CD4-positive, alpha-beta memory T cell (primary cell): ENCODE measurements at regions of chr21 and their contacts with region 1.

Region 1: DNA sequence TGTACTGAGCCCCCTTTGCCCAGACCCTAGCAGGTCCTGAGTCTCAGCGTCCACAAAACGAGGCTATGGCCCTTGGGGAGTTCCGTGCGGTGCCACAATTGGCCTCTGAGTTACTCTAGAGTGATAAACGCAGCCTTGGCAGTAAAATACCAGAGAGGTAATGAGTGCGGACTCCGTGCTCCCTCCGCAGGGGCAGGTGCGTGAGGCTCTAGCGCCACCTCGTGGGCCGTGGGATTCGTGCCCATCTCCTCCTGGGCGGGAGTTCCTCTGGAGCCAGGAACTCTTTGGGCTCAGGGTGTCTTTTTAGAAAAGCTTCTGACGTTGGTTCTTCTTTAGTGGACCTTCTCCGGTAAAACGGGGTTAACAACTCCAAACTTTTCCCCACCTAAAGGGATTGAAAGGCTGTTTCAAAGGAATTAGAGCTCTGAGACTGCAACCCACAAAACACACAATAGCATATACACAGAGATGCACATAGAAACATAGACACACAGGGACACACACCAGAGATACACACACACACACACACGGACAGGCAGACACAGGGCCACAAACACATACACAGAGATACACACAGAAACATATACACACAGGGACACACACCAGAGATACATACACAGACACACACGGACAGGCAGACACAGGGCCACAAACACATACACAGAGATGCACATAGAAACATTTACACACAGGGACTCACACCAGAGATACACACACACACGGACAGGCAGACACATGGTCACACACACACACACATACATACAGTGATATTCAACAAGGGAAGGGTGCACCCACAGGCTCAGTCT is 99.4 kb downstream of the KCNJ15 start:
- DNase-seq: peak; percentile 41 to 52 (median 51)
- H3K4me3 ChIP-seq: no peak overlapping the region
- H3K4me3 Mint-ChIP-seq: no peak overlapping the region
- H3K27ac ChIP-seq: no peak overlapping the region
- H3K27ac Mint-ChIP-seq: no peak overlapping the region
- H3K4me1 ChIP-seq: no peaks in the 10 kb centered on the region
- H3K4me1 Mint-ChIP-seq: no peaks in the 10 kb centered on the region
- H3K27me3 ChIP-seq: no peaks in the 10 kb centered on the region
- H3K27me3 Mint-ChIP-seq: peaks cover 3 to 12% of the 10 kb centered on the region in 2 donors

Region 2: DNA sequence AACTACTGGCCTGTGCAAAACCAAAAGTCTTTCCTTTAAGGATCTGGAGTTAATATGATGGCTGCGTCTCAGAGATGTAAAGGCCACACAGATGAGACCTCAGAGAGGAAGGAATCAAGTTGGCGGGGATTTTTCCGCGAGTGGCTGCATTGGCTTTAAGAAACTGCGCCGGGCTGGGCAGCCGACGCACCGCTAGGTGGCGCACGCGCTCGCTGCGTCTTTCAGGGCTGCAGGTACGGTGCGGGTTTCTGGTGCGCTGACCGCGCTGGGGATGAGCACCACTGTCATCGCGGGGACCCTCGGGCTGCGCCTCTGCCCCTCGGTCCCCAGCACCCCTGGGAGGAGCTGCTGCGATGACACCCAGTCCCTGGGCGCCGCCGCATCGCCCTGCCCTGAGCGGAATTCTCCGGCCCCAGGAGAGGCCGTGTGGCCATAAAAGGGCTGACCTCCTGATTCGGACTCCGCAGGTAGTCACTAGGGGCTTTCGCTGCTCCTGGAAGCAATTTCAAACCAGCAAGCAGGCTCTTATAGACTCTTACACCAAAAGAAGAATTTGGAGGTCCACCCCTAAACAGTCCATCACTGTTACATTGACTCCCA is 680.9 kb before region 1 on chr21:
- CTCF ChIA-PET with region 1: no interaction called
- POLR2A ChIA-PET with region 1: no interaction called
- intact Hi-C with region 1: loop called (anchors 10 kb)
- DNase-seq: peak in 4 of 5 donors; percentile 22 to 42 (median 33)
- H3K4me3 ChIP-seq: no peak overlapping the region
- H3K4me3 Mint-ChIP-seq: peak overlapping the region in 1 of 8 donors; percentile 26
- H3K27ac ChIP-seq: no peak overlapping the region
- H3K27ac Mint-ChIP-seq: no peak overlapping the region
- H3K4me1 ChIP-seq: peaks cover 6% of the 10 kb centered on the region
- H3K4me1 Mint-ChIP-seq: peaks cover 0 to 3% (median under 1%) of the 10 kb centered on the region in 4 donors
- H3K27me3 ChIP-seq: no peaks in the 10 kb centered on the region
- H3K27me3 Mint-ChIP-seq: peaks cover 11 to 22% of the 10 kb centered on the region in 2 donors

Region 3: GRCh38 chr21:37700641-37701202 is 655.5 kb before region 1 on chr21:
- CTCF ChIA-PET with region 1: no interaction called
- POLR2A ChIA-PET with region 1: no interaction called
- intact Hi-C with region 1: loop called (anchors 10 kb)
- DNase-seq: peak in 2 of 5 donors; percentile 6
- H3K4me3 ChIP-seq: no peak overlapping the region
- H3K4me3 Mint-ChIP-seq: no peak overlapping the region
- H3K27ac ChIP-seq: no peak overlapping the region
- H3K27ac Mint-ChIP-seq: no peak overlapping the region
- H3K4me1 ChIP-seq: no peaks in the 10 kb centered on the region
- H3K4me1 Mint-ChIP-seq: no peaks in the 10 kb centered on the region
- H3K27me3 ChIP-seq: no peaks in the 10 kb centered on the region
- H3K27me3 Mint-ChIP-seq: peaks cover 7 to 12% of the 10 kb centered on the region in 2 donors

Region 4: GRCh38 chr21:38159355-38159754 is 196.8 kb before region 1 on chr21:
- CTCF ChIA-PET with region 1: interaction called, 16 read pairs
- POLR2A ChIA-PET with region 1: no interaction called
- intact Hi-C with region 1: loop called (anchors 1 kb)
- DNase-seq: peak; percentile 6 to 46 (median 38)
- H3K4me3 ChIP-seq: no peak overlapping the region
- H3K4me3 Mint-ChIP-seq: peak overlapping the region in 1 of 8 donors; percentile 12
- H3K27ac ChIP-seq: no peak overlapping the region
- H3K27ac Mint-ChIP-seq: no peak overlapping the region
- H3K4me1 ChIP-seq: no peaks in the 10 kb centered on the region
- H3K4me1 Mint-ChIP-seq: no peaks in the 10 kb centered on the region
- H3K27me3 ChIP-seq: no peaks in the 10 kb centered on the region
- H3K27me3 Mint-ChIP-seq: peaks cover 5 to 8% of the 10 kb centered on the region in 2 donors

Region 5: DNA sequence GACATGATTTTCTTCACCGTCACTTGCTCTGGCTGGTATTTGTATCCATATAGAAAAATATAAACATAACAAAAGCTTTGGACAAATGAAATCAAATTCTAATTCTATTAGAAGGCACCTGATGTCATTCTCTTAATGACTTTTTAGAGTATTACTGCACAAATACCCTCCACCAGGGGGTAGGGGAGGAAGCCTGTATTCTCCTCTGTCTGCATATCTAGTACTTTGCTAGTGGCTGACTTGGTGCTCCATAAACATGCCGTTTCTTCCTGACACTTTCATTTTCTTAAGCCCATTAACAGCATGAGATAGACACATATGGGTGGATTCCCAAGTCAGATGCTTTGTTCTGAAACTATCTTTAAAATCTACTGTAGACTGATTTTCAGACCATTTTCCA is 120.0 kb before region 1 on chr21:
- CTCF ChIA-PET with region 1: interaction called, 13 read pairs
- POLR2A ChIA-PET with region 1: no interaction called
- intact Hi-C with region 1: no loop called
- DNase-seq: no peak
- H3K4me3 ChIP-seq: no peak overlapping the region
- H3K4me3 Mint-ChIP-seq: no peak overlapping the region
- H3K27ac ChIP-seq: no peak overlapping the region
- H3K27ac Mint-ChIP-seq: no peak overlapping the region
- H3K4me1 ChIP-seq: no peaks in the 10 kb centered on the region
- H3K4me1 Mint-ChIP-seq: no peaks in the 10 kb centered on the region
- H3K27me3 ChIP-seq: no peaks in the 10 kb centered on the region
- H3K27me3 Mint-ChIP-seq: no peaks in the 10 kb centered on the region

Region 6: DNA sequence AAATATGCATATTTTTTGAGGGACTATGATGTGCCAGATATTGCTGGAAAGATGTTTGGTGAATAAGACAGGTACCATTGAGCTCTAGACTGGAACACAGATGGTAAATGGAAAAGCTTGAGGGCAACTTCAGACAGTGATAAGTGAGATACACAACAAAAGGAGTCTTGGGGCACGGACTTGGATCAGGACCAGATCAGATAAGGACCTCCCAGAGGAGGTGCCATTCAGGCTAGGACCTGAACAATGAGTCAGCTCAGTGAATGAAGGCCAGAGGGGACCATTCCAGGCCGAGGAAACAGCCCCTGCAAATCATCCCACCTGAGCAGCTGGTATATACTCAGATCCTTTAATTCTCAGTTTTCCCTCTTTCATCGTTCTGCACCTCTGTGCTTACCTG is 101.2 kb before region 1 on chr21:
- CTCF ChIA-PET with region 1: no interaction called
- POLR2A ChIA-PET with region 1: no interaction called
- intact Hi-C with region 1: no loop called
- DNase-seq: no peak
- H3K4me3 ChIP-seq: no peak overlapping the region
- H3K4me3 Mint-ChIP-seq: no peak overlapping the region
- H3K27ac ChIP-seq: no peak overlapping the region
- H3K27ac Mint-ChIP-seq: no peak overlapping the region
- H3K4me1 ChIP-seq: no peaks in the 10 kb centered on the region
- H3K4me1 Mint-ChIP-seq: peaks cover 0 to 1% (median 0%) of the 10 kb centered on the region in 4 donors
- H3K27me3 ChIP-seq: no peaks in the 10 kb centered on the region
- H3K27me3 Mint-ChIP-seq: peaks cover under 1 to 3% of the 10 kb centered on the region in 2 donors